Heart right ventricle (tissue), 16 donors: ENCODE measurements at regions of chr2 and their contacts with region 1.

Region 1: GRCh38 chr2:191933307-191934105 is 86.6 kb upstream of the CAVIN2 start:
- DNase-seq: no peak
- ATAC-seq: no peak
- H3K4me3 ChIP-seq: no peak overlapping the region
- H3K27ac ChIP-seq: no peak overlapping the region
- H3K4me1 ChIP-seq: peaks cover 0 to 31% (median 5%) of the 10 kb centered on the region in 9 donors
- H3K27me3 ChIP-seq: no peaks in the 10 kb centered on the region
- CTCF ChIP-seq: no peak

Region 2: DNA sequence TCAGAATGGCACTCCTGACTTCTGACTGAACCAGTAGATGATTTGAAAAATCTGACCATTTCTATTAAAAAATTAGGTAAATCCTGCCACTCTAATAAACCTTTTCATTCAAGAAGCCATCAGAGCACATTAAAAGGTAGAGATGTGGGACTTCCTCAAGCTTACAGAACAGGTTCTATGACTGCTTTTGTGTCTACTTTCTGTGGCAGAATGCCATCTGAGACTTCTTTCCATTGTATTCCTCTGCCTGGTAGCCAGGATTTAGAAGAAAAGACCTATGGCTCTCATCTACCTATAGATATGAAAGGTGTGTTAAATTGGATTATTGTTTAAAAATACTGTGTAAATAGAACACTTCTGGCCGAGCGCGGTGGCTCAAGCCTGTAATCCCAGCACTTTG is 355.5 kb before region 1 on chr2:
- intact Hi-C with region 1: loop called in 1 of 10 experiments (anchors 5 kb)
- DNase-seq: no peak
- ATAC-seq: no peak
- H3K4me3 ChIP-seq: no peak overlapping the region
- H3K27ac ChIP-seq: no peak overlapping the region
- H3K4me1 ChIP-seq: no peaks in the 10 kb centered on the region
- H3K27me3 ChIP-seq: peaks cover 0 to 14% (median 0%) of the 10 kb centered on the region in 7 donors
- CTCF ChIP-seq: no peak